CD4-positive, alpha-beta T cell (primary cell): ENCODE measurements at regions of chr1 and their contacts with region 1.

Region 1: DNA sequence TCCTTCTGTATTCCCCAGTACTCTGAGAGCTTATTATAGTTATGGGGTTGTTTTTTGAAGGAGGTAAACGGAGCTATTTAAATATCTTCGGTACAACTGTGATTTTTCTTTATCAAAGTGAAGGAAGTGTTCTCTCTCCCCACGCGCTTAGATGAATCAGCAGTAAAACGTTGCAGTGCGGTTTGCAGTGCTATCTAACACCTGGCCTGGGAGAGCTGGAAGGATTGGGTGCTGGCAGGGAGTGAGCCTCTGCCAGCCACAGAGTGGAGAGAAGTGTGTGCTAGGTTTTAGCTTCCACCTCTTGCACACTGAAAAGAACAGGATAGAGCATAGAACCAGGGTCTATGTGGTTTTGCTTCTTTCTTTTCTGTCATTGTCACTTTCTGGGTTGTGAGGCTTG is 165.9 kb downstream of the SDCCAG8 start:
- DNase-seq: peak in 13 of 14 experiments; percentile 1 to 66 (median 18)
- ATAC-seq: peak; percentile 98
- H3K4me3 ChIP-seq: peak overlapping the region; percentile 24
- H3K4me3 Mint-ChIP-seq: peak overlapping the region; percentile 47
- H3K27ac ChIP-seq: no peak overlapping the region
- H3K27ac Mint-ChIP-seq: peak overlapping the region; percentile 3
- H3K4me1 ChIP-seq: peaks cover 9% of the 10 kb centered on the region
- H3K4me1 Mint-ChIP-seq: peaks cover 29% of the 10 kb centered on the region
- H3K27me3 ChIP-seq: no peaks in the 10 kb centered on the region
- H3K27me3 Mint-ChIP-seq: no peaks in the 10 kb centered on the region
- CTCF ChIP-seq: no peak

Region 2: DNA sequence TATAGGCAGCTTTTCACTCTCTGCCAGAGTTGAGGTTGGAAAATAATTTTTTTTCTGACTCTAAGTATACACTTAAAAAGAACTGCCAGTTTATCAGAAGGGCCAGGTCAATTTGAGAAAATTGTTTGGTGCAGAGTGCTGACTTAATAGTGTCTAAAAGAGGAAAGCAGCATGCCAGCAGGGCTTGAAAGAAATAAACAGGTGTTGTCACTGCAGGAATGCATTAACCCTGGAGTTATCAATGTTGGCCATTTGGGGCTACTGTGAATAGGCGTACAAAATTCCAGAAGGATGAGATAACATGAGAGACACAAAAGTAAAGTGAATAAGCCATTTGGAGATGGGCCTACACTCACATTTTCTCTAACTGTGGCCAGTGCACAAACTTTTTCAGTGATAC is 676.7 kb before region 1 on chr1:
- CTCF ChIA-PET with region 1: no interaction called
- POLR2A ChIA-PET with region 1: no interaction called
- intact Hi-C with region 1: loop called in 1 of 2 experiments (anchors 10 kb)
- DNase-seq: no peak
- ATAC-seq: no peak
- H3K4me3 ChIP-seq: no peak overlapping the region
- H3K4me3 Mint-ChIP-seq: no peak overlapping the region
- H3K27ac ChIP-seq: no peak overlapping the region
- H3K27ac Mint-ChIP-seq: no peak overlapping the region
- H3K4me1 ChIP-seq: no peaks in the 10 kb centered on the region
- H3K4me1 Mint-ChIP-seq: no peaks in the 10 kb centered on the region
- H3K27me3 ChIP-seq: no peaks in the 10 kb centered on the region
- H3K27me3 Mint-ChIP-seq: no peaks in the 10 kb centered on the region
- CTCF ChIP-seq: no peak

Region 3: GRCh38 chr1:243390162-243390791 is 31.5 kb before region 1 on chr1:
- CTCF ChIA-PET with region 1: no interaction called
- POLR2A ChIA-PET with region 1: no interaction called
- intact Hi-C with region 1: no loop called
- DNase-seq: no peak
- ATAC-seq: no peak
- H3K4me3 ChIP-seq: no peak overlapping the region
- H3K4me3 Mint-ChIP-seq: no peak overlapping the region
- H3K27ac ChIP-seq: no peak overlapping the region
- H3K27ac Mint-ChIP-seq: no peak overlapping the region
- H3K4me1 ChIP-seq: no peaks in the 10 kb centered on the region
- H3K4me1 Mint-ChIP-seq: no peaks in the 10 kb centered on the region
- H3K27me3 ChIP-seq: no peaks in the 10 kb centered on the region
- H3K27me3 Mint-ChIP-seq: no peaks in the 10 kb centered on the region
- CTCF ChIP-seq: no peak

Region 4: DNA sequence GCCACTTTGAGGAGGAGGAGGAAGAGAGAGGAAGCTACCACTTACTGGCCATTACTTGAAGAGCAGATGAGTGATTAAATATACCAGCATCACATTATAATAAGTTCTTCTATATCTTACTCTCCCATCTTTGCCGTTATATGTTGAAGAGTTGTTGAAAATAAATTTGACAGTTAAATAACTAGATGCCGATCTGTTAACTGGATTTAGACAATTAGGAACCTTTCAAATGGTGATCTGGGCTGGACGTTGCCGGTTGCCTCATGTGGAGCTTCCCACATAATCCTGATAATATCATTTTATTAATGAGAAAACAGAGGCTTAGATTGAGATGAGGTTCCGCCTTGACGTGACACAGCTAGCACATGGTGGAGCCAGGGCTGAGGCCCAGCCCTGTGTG is 18.9 kb before region 1 on chr1:
- CTCF ChIA-PET with region 1: no interaction called
- POLR2A ChIA-PET with region 1: no interaction called
- intact Hi-C with region 1: no loop called
- DNase-seq: no peak
- ATAC-seq: no peak
- H3K4me3 ChIP-seq: no peak overlapping the region
- H3K4me3 Mint-ChIP-seq: no peak overlapping the region
- H3K27ac ChIP-seq: no peak overlapping the region
- H3K27ac Mint-ChIP-seq: no peak overlapping the region
- H3K4me1 ChIP-seq: no peaks in the 10 kb centered on the region
- H3K4me1 Mint-ChIP-seq: no peaks in the 10 kb centered on the region
- H3K27me3 ChIP-seq: no peaks in the 10 kb centered on the region
- H3K27me3 Mint-ChIP-seq: no peaks in the 10 kb centered on the region
- CTCF ChIP-seq: no peak

Region 5: DNA sequence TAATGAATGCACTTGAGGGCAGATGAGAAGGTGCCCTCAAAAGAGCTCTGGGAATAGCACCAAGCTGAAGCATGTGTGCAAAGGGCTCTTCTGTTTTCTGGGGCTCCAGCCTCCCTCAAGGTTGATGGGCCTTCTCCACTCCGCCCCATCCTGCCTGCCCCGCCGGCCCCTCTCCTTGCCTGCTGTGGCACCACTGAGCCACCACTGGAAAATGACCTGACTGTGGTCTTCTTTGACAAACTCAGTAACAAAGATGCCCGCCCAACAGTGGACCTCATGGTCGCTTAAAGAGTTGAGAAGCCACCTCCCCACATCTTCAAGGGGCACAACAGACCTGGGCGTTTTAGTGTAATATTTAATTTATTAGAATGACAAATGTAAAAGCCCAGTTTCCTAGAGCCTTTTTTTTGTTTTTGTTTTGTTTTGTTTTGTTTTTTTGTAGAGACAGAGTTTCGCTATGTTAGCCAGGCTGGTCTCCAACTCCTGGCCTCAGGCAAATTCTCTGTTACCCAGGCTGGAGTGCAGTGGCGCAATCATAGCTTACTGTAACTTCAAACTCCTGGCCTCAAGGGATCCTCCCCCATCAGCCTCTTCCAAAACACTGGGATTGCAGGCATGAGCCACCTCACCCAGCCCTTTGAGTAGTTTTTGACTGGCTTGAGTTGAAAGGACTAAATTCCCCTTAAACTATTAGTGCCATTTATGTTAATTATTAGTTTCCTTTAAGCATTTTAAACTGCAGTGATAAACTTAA is 600.3 kb after region 1 on chr1:
- CTCF ChIA-PET with region 1: no interaction called
- POLR2A ChIA-PET with region 1: no interaction called
- intact Hi-C with region 1: no loop called
- DNase-seq: no peak
- ATAC-seq: no peak
- H3K4me3 ChIP-seq: no peak overlapping the region
- H3K4me3 Mint-ChIP-seq: no peak overlapping the region
- H3K27ac ChIP-seq: no peak overlapping the region
- H3K27ac Mint-ChIP-seq: no peak overlapping the region
- H3K4me1 ChIP-seq: no peaks in the 10 kb centered on the region
- H3K4me1 Mint-ChIP-seq: no peaks in the 10 kb centered on the region
- H3K27me3 ChIP-seq: no peaks in the 10 kb centered on the region
- H3K27me3 Mint-ChIP-seq: no peaks in the 10 kb centered on the region
- CTCF ChIP-seq: no peak